Activated CD4-positive, alpha-beta T cell treated with anti-CD3 and anti-CD28 coated beads for 36 hours (primary cell): ENCODE measurements at regions of chr1 and their contacts with region 1.

Region 1: DNA sequence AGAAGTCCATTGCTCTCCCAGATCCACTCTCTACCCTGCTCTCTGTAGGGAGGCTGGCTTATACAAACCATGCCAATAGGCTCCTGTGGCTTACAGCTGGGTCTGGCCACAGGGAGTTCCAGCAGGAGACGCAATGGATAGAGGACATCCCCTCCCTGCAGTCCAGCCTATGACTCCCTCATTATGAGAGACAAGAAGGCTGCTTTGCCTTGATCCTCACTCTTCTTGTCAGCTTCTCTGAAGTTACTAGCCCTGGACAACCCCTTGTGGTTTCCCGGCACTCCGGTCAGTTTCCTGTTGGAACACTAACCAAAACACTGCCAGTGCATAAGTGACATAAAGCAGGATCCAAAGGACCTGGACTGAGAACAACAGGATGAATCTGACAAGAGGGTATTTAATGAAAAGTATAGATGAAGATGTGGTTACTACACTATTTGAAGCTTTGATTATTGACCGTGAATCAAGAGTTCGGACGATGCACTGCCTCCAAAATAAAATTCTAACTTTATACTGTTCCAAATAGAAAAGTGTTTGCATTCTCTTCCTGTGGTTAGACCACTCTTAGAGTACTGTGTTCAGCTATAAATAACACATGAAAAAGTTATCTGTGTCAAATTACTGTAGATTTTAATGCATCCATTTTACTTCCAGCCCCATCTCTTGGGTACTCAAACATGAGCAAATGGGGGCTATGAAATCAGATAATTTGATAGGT is 32.7 kb upstream of the ZNF326 start:
- DNase-seq: no peak
- ATAC-seq: no peak
- H3K4me3 Mint-ChIP-seq: no peak overlapping the region
- H3K27ac Mint-ChIP-seq: no peak overlapping the region
- H3K4me1 Mint-ChIP-seq: peaks cover 11% of the 10 kb centered on the region
- H3K27me3 Mint-ChIP-seq: no peaks in the 10 kb centered on the region

Region 2: DNA sequence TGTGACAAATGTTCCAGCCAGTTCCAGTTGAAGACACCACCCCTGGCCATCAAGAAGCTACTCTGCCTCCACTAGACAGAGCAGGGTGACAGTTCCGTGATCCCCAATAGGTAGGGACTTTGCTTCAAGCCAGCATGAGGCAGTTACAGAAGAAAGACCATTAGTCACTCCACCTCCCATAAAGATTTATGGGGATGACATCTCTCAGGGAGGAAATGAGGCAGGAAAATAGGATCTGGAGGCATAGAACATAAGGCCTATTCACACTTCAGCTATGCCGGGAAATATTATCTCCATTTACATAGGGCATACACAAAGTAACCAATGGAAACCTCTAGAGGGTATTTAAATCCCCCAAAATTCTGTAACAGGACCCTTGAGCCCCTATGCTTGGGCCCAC is 782.8 kb before region 1 on chr1:
- CTCF ChIA-PET with region 1: no interaction called
- POLR2A ChIA-PET with region 1: interaction called, 11 read pairs
- intact Hi-C with region 1: no loop called
- DNase-seq: no peak
- ATAC-seq: no peak
- H3K4me3 Mint-ChIP-seq: no peak overlapping the region
- H3K27ac Mint-ChIP-seq: no peak overlapping the region
- H3K4me1 Mint-ChIP-seq: peaks cover 4% of the 10 kb centered on the region
- H3K27me3 Mint-ChIP-seq: no peaks in the 10 kb centered on the region

Region 3: GRCh38 chr1:89780721-89781120 is 181.5 kb before region 1 on chr1:
- CTCF ChIA-PET with region 1: no interaction called
- POLR2A ChIA-PET with region 1: no interaction called
- intact Hi-C with region 1: no loop called
- DNase-seq: peak; percentile 59
- ATAC-seq: peak; percentile 73
- H3K4me3 Mint-ChIP-seq: peak overlapping the region; percentile 48
- H3K27ac Mint-ChIP-seq: peak overlapping the region; percentile 86
- H3K4me1 Mint-ChIP-seq: peaks cover 44% of the 10 kb centered on the region
- H3K27me3 Mint-ChIP-seq: no peaks in the 10 kb centered on the region